Panc1 (cell line): ENCODE measurements at regions of chr9 and their contacts with region 1.

Region 1: DNA sequence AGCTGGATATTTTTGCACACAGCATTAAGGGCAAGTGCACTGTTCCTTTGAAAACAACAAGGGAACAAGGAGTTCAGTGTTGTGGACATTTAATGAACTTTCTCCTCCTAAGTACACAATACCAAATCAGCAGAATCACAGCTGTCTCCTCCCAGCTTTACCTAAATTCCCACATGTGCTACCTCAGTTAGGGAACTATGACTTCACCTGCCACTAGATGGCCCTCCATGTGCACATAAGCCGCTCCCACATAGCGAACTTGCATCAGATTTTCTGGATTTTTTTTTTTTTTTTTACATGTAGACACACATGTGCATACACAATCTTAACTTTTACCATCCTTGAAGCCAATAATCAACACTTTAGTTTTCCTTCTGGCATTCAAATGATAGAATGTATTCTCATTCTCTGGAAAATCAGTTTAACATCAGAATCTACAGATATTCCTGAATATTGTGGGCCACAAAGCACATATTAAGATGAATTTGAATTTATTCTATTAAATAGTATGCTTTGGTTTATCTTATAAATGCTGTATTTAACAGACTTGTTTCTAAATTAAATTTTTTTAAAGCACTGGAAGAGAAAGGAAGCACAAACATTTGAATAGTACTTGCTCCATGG is 123.6 kb downstream of the PALM2AKAP2 start:
- DNase-seq: peak; percentile 59
- ATAC-seq: peak; percentile 81
- H3K4me3 ChIP-seq: no peak overlapping the region
- H3K27ac ChIP-seq: no peak overlapping the region
- H3K4me1 ChIP-seq: no peaks in the 10 kb centered on the region
- H3K27me3 ChIP-seq: no peaks in the 10 kb centered on the region
- CTCF ChIP-seq: peak; percentile 75

Region 2: DNA sequence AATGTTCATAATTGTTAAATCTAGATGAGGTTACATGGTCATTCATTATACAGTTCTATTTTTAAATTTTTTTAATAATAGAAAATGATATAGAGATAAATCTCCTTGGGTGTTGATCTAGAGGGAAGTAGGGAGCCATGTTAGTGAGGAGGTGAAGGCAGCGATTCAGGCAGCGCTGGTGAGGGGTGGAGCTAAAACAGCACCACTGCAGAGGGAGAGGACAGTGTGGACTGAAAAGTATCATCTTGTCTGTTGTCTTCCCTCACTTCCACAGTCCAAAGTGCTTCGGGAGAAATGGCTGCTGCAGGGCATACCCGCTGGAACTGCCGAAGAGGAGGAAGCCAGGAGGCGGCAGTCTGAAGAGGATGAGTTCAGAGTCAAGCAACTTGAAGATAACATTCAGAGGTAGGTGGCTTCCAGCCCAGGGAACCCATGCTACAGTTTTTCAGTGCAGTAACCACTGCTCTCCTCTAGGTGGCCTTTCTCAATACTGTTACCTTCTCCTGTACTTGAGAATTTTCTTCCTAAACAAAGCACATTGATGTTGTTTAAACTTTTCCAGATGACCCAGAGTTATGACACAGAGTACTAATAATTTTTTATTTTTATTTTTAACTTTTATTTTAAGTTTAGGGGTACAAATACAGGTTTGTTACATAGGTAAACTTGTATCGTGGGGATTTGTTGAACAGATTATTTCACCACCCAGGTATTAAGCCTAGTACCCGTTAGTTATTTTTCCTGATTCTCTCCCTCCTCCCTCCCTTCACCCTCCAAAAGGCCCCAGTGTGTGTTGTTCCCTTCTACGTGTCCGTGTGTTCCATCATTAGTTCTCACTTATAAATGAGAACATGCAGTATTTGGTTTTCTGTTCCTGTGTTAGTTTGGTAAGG is 23.1 kb before region 1 on chr9:
- CTCF ChIA-PET with region 1: no interaction called
- POLR2A ChIA-PET with region 1: no interaction called
- in situ Hi-C with region 1: no loop called
- intact Hi-C with region 1: no loop called
- DNase-seq: no peak
- ATAC-seq: no peak
- H3K4me3 ChIP-seq: no peak overlapping the region
- H3K27ac ChIP-seq: no peak overlapping the region
- H3K4me1 ChIP-seq: no peaks in the 10 kb centered on the region
- H3K27me3 ChIP-seq: no peaks in the 10 kb centered on the region
- CTCF ChIP-seq: peak; percentile 61

Region 3: GRCh38 chr9:110006660-110007059 is 103.0 kb after region 1 on chr9:
- CTCF ChIA-PET with region 1: no interaction called
- POLR2A ChIA-PET with region 1: no interaction called
- in situ Hi-C with region 1: no loop called
- intact Hi-C with region 1: no loop called
- DNase-seq: no peak
- ATAC-seq: no peak
- H3K4me3 ChIP-seq: no peak overlapping the region
- H3K27ac ChIP-seq: no peak overlapping the region
- H3K4me1 ChIP-seq: no peaks in the 10 kb centered on the region
- H3K27me3 ChIP-seq: no peaks in the 10 kb centered on the region
- CTCF ChIP-seq: peak; percentile 18; the same call in 1 of the 2 replicates

Region 4: GRCh38 chr9:110058304-110058953 is 154.8 kb after region 1 on chr9:
- CTCF ChIA-PET with region 1: no interaction called
- POLR2A ChIA-PET with region 1: no interaction called
- in situ Hi-C with region 1: no loop called
- intact Hi-C with region 1: loop called (anchors 1 kb)
- DNase-seq: no peak
- ATAC-seq: peak; percentile 84
- H3K4me3 ChIP-seq: no peak overlapping the region
- H3K27ac ChIP-seq: no peak overlapping the region
- H3K4me1 ChIP-seq: no peaks in the 10 kb centered on the region
- H3K27me3 ChIP-seq: no peaks in the 10 kb centered on the region
- CTCF ChIP-seq: peak; percentile 70

Region 5: GRCh38 chr9:110152704-110153374 is 249.2 kb after region 1 on chr9:
- CTCF ChIA-PET with region 1: no interaction called
- POLR2A ChIA-PET with region 1: no interaction called
- in situ Hi-C with region 1: no loop called
- intact Hi-C with region 1: loop called (anchors 1 kb)
- DNase-seq: peak; percentile 22
- ATAC-seq: no peak; the same call in none of the 2 replicates
- H3K4me3 ChIP-seq: no peak overlapping the region
- H3K27ac ChIP-seq: no peak overlapping the region
- H3K4me1 ChIP-seq: no peaks in the 10 kb centered on the region
- H3K27me3 ChIP-seq: no peaks in the 10 kb centered on the region
- CTCF ChIP-seq: peak; percentile 69

Region 6: GRCh38 chr9:110217656-110218099 is 314.1 kb after region 1 on chr9:
- CTCF ChIA-PET with region 1: no interaction called
- POLR2A ChIA-PET with region 1: no interaction called
- in situ Hi-C with region 1: no loop called
- intact Hi-C with region 1: loop called (anchors 5 kb)
- DNase-seq: no peak
- ATAC-seq: no peak
- H3K4me3 ChIP-seq: no peak overlapping the region
- H3K27ac ChIP-seq: no peak overlapping the region
- H3K4me1 ChIP-seq: no peaks in the 10 kb centered on the region
- H3K27me3 ChIP-seq: no peaks in the 10 kb centered on the region
- CTCF ChIP-seq: peak; percentile 75